Activated CD8-positive, alpha-beta T cell treated with anti-CD3 and anti-CD28 coated beads for 36 hours (primary cell): ENCODE measurements at regions of chr2 and their contacts with region 1.

Region 1: GRCh38 chr2:26345545-26346453 is at the start of gene SELENOI:
- DNase-seq: peak; percentile 99
- ATAC-seq: peak; percentile 95
- H3K4me3 Mint-ChIP-seq: peak within 1 kb of the TSS; percentile 97
- H3K27ac Mint-ChIP-seq: peak within 1 kb of the TSS; percentile 98
- H3K4me1 Mint-ChIP-seq: peaks cover 31% of the 10 kb centered on the region
- H3K27me3 Mint-ChIP-seq: no peaks in the 10 kb centered on the region
- CTCF ChIP-seq: no peak
- total RNA-seq, gene SELENOI: 38.9 to 39.1 TPM

Region 2: DNA sequence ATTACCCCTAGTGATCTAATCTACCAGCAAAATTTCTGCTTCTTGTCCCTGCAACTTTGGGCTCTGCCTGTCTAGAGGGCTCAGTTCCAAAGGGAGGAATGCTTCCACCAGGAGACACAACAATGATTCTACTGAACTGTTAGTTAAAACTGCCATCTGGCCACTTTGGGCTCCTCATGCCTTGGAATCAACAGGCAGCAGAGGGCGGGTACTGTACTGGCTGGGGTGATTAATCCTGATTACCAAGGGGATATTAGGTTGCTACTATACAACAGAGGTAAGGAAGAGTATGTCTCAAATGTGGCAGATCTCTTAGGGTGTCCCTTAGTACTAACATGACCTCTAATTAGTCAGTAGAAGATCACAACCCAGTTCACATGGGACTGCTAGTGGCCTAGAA is 122.8 kb before region 1 on chr2:
- CTCF ChIA-PET with region 1: no interaction called
- POLR2A ChIA-PET with region 1: no interaction called
- intact Hi-C with region 1: no loop called
- DNase-seq: no peak
- ATAC-seq: no peak
- H3K4me3 Mint-ChIP-seq: no peak overlapping the region
- H3K27ac Mint-ChIP-seq: no peak overlapping the region
- H3K4me1 Mint-ChIP-seq: no peaks in the 10 kb centered on the region
- H3K27me3 Mint-ChIP-seq: no peaks in the 10 kb centered on the region
- CTCF ChIP-seq: no peak

Region 3: DNA sequence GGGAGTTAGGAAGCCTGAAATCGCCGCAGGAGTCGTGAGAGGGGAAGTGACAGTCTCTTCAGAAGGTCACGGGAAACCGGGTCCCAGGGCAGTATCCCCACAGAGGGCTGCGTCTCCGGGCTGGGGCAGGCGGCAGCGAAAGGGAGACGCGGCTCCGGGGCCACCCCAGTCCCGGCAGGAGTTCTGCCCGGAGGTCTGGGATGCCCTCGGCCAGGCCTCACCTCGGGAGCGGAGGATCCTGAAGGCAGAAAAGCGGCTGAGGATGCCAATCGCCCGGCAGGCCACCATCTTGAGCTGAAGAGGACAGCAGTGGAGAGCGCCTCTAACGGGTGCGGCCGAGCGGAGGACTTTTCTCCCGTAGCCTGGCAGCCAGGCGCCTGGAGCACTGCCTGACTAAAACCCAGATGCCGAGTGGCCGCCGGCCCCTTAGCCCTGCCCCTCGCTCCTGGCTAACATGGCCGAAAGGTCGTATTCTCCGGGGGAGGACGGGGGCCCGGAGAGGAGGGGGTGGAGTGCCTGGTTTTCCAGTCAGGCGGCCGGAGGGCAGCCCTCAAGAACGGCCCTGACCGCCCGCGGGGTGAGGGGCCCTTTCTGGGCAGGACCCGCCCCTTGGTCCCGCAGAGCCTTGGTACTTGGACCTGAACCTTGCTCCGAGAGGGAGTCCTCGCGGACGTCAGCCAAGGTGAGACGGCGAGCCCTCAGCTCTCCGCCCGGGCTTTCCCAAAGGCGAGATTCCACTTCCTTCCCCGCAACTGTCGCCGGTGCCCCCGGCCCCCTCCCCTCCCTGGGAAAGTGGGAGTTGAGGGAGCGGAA is 101.3 kb before region 1 on chr2 and contains the starts of genes HADHA and HADHB:
- CTCF ChIA-PET with region 1: interaction called, 5 read pairs
- POLR2A ChIA-PET with region 1: interaction called, 23 read pairs
- intact Hi-C with region 1: no loop called
- DNase-seq: peak; percentile 88
- ATAC-seq: peak; percentile 80
- H3K4me3 Mint-ChIP-seq: peak within 1 kb of the TSS; percentile 94
- H3K27ac Mint-ChIP-seq: peak within 1 kb of the TSS; percentile 100
- H3K4me1 Mint-ChIP-seq: peaks cover 52% of the 10 kb centered on the region
- H3K27me3 Mint-ChIP-seq: no peaks in the 10 kb centered on the region
- CTCF ChIP-seq: no peak
- total RNA-seq, gene HADHA: 118 to 120 TPM
- total RNA-seq, gene HADHB: 58.8 TPM